Common myeloid progenitor, CD34-positive (primary cell): ENCODE measurements at regions of chr5 and their contacts with region 1.

Region 1: DNA sequence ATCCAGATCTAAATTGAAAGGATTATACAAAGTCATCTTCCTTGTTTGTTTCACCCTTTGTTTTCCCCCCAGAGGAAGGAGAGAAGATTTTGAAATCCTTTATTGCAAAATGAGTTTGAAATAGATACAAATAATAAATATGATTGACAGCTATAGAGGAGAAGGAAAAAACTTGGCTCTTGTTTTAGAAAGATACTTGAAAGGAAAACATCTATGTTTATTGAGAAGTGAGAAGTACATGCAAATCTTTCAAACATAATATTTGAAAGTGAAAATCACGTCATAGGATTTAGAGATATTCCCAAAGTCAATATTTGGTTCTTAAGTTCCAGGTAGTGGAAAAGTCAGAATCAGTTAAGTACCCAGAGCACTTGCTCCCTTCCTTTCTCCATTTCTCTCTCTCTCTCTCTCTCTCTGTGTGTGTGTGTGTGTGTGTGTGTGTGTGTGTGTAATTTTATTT is 27.2 kb downstream of the PAM start:
- DNase-seq: peak in 1 of 3 donors; percentile 28
- H3K4me3 ChIP-seq: no peak overlapping the region
- H3K27ac ChIP-seq: no peak overlapping the region
- H3K4me1 ChIP-seq: peaks cover 0 to 9% (median 0%) of the 10 kb centered on the region in 4 experiments
- H3K27me3 ChIP-seq: no peaks in the 10 kb centered on the region

Region 2: DNA sequence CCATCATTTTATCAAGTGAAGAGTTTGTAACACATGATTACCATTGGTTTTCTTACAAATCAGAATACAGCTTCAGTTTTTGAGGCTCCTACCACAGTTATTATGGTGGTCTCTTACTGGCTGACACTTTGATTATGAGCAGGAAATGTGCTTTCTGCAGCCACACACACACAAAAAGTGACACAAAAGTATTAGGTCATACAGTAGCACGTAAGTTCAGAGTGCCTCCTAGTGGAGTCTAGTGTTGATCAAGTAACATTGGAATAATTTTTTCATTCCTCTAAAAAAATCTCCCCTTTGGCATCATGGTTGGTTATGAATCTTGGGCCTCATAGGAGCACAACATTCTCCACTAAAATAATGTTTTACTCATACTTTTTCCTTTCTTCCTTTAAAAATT is 10.4 kb after region 1 on chr5:
- CTCF ChIA-PET with region 1: interaction called, 22 read pairs
- POLR2A ChIA-PET with region 1: no interaction called
- DNase-seq: peak; percentile 18 to 53 (median 36)
- H3K4me3 ChIP-seq: no peak overlapping the region
- H3K27ac ChIP-seq: no peak overlapping the region
- H3K4me1 ChIP-seq: peaks cover 0 to 2% (median 0%) of the 10 kb centered on the region in 4 experiments
- H3K27me3 ChIP-seq: no peaks in the 10 kb centered on the region

Region 3: DNA sequence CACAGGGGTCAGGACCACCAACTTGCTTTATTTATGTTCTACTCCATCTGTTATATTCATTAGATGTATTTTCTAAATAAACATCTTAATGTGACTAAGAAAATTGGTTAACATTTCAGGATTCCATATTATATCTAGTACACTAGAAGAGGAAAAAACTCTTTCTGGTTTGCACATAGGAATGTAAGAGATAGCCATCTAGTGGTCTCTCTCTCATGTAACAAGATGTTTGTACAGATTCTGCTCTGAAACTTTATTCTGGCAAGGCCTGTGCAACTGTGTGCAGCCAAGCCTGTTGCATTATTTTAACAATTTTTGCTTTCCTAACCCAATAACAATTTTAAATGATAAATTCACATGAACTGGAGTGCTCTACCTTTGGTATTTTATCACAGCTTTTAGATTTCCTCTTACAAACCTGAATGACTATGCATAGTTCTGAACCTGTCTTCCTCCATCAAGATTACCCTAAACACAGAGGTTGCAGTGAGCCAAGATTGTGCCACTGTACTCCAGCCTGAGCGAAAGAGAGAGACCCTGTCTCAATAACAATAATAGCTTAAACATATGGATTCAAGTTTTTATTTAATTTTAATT is 189.5 kb after region 1 on chr5:
- CTCF ChIA-PET with region 1: interaction called, 17 read pairs
- POLR2A ChIA-PET with region 1: no interaction called
- DNase-seq: peak; percentile 9 to 51 (median 40)
- H3K4me3 ChIP-seq: no peak overlapping the region
- H3K27ac ChIP-seq: no peak overlapping the region
- H3K4me1 ChIP-seq: peaks cover 0 to 5% (median 2%) of the 10 kb centered on the region in 4 experiments
- H3K27me3 ChIP-seq: no peaks in the 10 kb centered on the region

Region 4: GRCh38 chr5:103139264-103139865 is 357.0 kb after region 1 on chr5:
- CTCF ChIA-PET with region 1: interaction called, 15 read pairs
- POLR2A ChIA-PET with region 1: no interaction called
- DNase-seq: peak; percentile 80 to 90 (median 85)
- H3K4me3 ChIP-seq: no peak overlapping the region
- H3K27ac ChIP-seq: no peak overlapping the region
- H3K4me1 ChIP-seq: no peaks in the 10 kb centered on the region
- H3K27me3 ChIP-seq: no peaks in the 10 kb centered on the region